Natural killer cell (primary cell): ENCODE measurements at regions of chr12 and their contacts with region 1.

Region 1: DNA sequence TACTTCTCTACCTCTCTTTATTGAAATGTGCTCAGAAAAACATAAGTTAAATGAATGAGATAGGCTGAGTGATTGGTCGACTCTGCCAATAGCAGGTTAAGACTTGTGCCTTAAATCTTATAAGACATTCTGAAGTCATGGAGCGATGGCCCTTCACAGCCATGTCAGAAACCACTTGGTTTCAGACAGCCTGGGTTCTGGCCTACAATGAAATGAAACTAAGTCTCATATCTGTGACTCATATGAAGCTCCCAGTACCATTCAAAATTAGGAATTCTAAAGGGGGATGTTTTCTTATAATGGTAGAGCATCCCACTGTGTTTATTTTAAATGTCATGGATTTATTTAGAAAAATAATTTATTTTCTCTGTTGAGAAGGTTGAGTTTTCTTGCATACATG is 42.6 kb downstream of the PLXNC1 start:
- DNase-seq: no peak
- ATAC-seq: no peak
- H3K4me3 ChIP-seq: no peak overlapping the region
- H3K4me3 Mint-ChIP-seq: no peak overlapping the region
- H3K27ac ChIP-seq: no peak overlapping the region
- H3K27ac Mint-ChIP-seq: no peak overlapping the region
- H3K4me1 ChIP-seq: peaks cover 9% of the 10 kb centered on the region
- H3K4me1 Mint-ChIP-seq: peaks cover 32 to 42% of the 10 kb centered on the region in 2 donors
- H3K27me3 ChIP-seq: no peaks in the 10 kb centered on the region
- H3K27me3 Mint-ChIP-seq: no peaks in the 10 kb centered on the region
- CTCF ChIP-seq: no peak

Region 2: DNA sequence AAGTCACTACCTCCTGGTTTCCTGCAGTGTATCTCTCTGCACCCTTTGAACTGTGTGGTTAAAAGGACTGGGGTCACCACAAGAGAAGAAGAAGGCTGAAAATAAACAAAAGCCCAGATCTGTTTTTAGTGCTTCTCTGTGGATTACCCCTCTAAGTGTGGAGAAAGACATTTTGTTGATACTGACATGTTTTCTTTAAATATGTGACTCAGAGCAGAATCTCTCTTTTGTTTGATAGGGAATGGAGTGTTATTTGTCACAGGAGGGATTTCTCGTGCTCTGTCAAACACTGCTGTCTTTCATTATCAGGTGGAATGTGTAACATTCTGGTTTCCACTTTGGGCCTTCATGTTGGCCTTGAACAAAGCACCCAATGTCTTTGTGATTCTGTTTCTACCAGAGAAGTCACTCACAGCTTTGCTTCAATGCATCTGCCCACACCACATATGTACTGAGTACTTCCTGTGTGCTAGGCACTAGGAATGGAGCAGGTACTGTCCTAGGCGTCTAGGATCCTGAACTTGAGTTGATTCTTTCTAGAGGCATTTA is 39.4 kb after region 1 on chr12:
- intact Hi-C with region 1: loop called (anchors 5 kb)
- DNase-seq: peak in 1 of 2 donors; percentile 13
- ATAC-seq: peak; percentile 32 to 42 (median 34)
- H3K4me3 ChIP-seq: no peak overlapping the region
- H3K4me3 Mint-ChIP-seq: peak overlapping the region; percentile 21
- H3K27ac ChIP-seq: peak overlapping the region; percentile 5
- H3K27ac Mint-ChIP-seq: peak overlapping the region; percentile 67 to 80
- H3K4me1 ChIP-seq: peaks cover 3% of the 10 kb centered on the region
- H3K4me1 Mint-ChIP-seq: peaks cover 11 to 13% of the 10 kb centered on the region in 2 donors
- H3K27me3 ChIP-seq: no peaks in the 10 kb centered on the region
- H3K27me3 Mint-ChIP-seq: no peaks in the 10 kb centered on the region
- CTCF ChIP-seq: no peak

Region 3: DNA sequence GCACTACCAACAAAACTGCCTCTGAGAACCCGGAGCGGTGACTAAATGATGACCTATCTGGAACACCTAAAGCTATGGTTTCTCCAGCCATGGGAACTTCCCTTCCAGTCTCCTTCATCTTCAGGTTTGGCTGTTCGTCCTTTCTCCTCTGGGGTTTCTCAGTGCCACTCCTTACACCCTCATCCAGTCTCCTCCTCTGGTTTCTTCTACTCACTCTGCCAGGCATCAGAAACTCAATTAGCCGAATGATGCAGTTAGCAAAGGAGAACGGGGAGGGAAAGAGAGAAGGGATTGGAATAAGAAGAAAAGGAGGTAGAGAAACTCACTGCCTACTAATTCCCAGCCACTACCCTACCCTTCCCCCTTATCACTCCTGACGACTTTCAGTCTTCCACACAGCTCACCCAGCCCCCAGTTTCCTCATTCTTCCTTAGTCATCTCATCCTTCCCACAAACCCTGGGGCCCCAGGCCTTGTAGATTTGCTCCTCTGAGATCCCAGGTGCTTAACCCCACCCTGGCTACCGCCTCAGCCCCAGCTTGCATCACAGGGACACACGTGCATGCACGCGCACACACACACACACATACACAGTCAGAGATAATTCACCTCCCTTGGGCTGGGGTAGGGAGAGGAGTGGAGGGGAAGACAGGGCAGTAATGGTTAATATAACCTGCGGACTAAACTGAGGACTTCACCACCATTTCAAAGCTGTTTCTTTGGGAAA is 1013.3 kb after region 1 on chr12:
- intact Hi-C with region 1: no loop called
- DNase-seq: no peak
- ATAC-seq: no peak
- H3K4me3 ChIP-seq: no peak overlapping the region
- H3K4me3 Mint-ChIP-seq: no peak overlapping the region
- H3K27ac ChIP-seq: no peak overlapping the region
- H3K27ac Mint-ChIP-seq: no peak overlapping the region
- H3K4me1 ChIP-seq: peaks cover 3% of the 10 kb centered on the region
- H3K4me1 Mint-ChIP-seq: peaks cover 0 to 4% of the 10 kb centered on the region in 2 donors
- H3K27me3 ChIP-seq: no peaks in the 10 kb centered on the region
- H3K27me3 Mint-ChIP-seq: peaks cover 0 to 8% of the 10 kb centered on the region in 2 donors
- CTCF ChIP-seq: no peak